ENCODE measurements at regions of chr4 and their contacts with region 1.

Region 1: GRCh38 chr4:124997991-124998390 is 285.5 kb upstream of the ANKRD50 start:
- DNase-seq: no peak
- ATAC-seq: peak in 1 of 8 donors; percentile 29
- H3K4me3 ChIP-seq: no peak overlapping the region
- H3K27ac ChIP-seq: no peak overlapping the region
- H3K4me1 ChIP-seq: no peaks in the 10 kb centered on the region
- H3K27me3 ChIP-seq: no peaks in the 10 kb centered on the region
- CTCF ChIP-seq: no peak

Region 2: GRCh38 chr4:123588631-123589241 is 1409.3 kb before region 1 on chr4:
- intact Hi-C with region 1: loop called in 1 of 10 experiments (anchors 5 kb)
- DNase-seq: peak in 1 of 2 donors; percentile 47
- ATAC-seq: peak; percentile 68 to 95 (median 94)
- H3K4me3 ChIP-seq: no peak overlapping the region
- H3K27ac ChIP-seq: peak overlapping the region in 9 of 10 donors; percentile 46 to 80 (median 59)
- H3K4me1 ChIP-seq: peaks cover 0 to 21% (median 5%) of the 10 kb centered on the region in 9 donors
- H3K27me3 ChIP-seq: no peaks in the 10 kb centered on the region
- CTCF ChIP-seq: no peak

Measured in heart right ventricle (tissue), 16 donors.